Posterior vena cava (tissue), 2 donors: ENCODE measurements at regions of chr1 and their contacts with region 1.

Region 1: GRCh38 chr1:64136752-64137411 is 66.5 kb upstream of the UBE2U start:
- DNase-seq: peak; percentile 84

Region 2: DNA sequence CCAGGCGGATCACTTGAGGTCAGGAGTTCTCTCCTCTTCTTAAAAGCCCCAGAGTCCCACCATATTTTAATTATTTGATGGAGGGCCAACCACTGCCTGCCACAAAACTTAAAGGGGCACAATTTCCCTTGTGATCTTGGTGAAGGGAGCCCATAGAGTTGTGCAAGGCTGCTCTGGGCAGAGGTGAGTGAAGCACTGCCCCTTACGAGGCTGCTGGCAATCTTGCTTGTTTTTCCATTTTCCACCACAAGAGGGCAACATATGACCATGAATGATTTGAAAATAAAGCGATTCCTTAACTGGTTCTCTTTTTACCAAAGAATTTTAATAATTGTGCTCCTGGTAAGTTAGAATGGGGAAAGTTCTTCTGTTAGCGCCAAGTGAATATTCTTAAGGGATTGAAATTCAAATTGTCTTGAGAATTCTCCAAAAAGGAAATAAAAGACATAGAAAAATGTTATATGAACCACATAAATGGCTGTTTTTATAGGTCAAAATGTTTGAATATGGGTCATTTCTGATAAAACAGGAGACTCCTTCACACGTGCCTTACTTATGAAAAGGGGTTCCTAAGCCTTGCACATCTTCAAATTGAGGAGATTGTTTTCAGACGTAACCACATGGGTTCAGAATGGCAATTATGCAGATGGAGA is 521.0 kb before region 1 on chr1:
- intact Hi-C with region 1: loop called in 1 of 2 experiments (anchors 10 kb)
- DNase-seq: no peak

Region 3: GRCh38 chr1:63691701-63692425 is 445.0 kb before region 1 on chr1:
- intact Hi-C with region 1: loop called (anchors 10 kb)
- DNase-seq: no peak

Region 4: DNA sequence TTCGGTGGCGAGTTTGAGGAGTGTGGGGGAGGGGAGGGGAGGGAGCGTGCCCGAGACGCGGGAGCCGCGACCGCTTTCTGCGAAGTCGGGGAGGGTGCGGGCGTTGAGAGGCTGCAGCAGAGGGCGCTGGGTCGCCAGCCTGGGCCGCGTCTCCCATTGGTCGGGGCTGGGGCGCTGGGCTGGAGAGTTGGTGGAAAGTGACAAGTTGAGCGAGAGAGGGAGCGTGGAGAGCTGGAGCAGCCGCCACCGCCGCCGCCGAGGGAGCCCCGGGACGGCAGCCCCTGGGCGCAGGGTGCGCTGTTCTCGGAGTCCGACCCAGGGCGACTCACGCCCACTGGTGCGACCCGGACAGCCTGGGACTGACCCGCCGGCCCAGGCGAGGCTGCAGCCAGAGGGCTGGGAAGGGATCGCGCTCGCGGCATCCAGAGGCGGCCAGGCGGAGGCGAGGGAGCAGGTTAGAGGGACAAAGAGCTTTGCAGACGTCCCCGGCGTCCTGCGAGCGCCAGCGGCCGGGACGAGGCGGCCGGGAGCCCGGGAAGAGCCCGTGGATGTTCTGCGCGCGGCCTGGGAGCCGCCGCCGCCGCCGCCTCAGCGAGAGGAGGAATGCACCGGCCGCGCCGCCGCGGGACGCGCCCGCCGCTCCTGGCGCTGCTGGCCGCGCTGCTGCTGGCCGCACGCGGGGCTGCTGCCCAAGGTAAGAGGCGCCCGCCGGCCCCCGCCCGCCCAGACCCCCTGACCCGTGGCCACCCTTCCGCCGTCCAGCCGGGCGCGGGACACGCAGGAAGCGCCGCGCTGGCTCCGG is 362.9 kb before region 1 on chr1 and contains the start of gene ROR1:
- intact Hi-C with region 1: loop called (anchors 10 kb)
- DNase-seq: peak; percentile 96
- total RNA-seq, gene ROR1: 19.3 to 25.8 TPM

Region 5: GRCh38 chr1:63935143-63935542 is 201.7 kb before region 1 on chr1:
- intact Hi-C with region 1: loop called in 1 of 2 experiments (anchors 10 kb)
- DNase-seq: no peak

Region 6: GRCh38 chr1:63980740-63981407 is 156.0 kb before region 1 on chr1:
- intact Hi-C with region 1: no loop called
- DNase-seq: no peak